PC-3 (cell line): ENCODE measurements at regions of chr1 and their contacts with region 1.

Region 1: GRCh38 chr1:235295902-235296376 is 32.0 kb downstream of the ARID4B start:
- DNase-seq: peak; percentile 93
- ATAC-seq: peak; percentile 96
- H3K4me3 ChIP-seq: no peak overlapping the region
- H3K27ac ChIP-seq: peak overlapping the region; percentile 68; the same call in 1 of the 2 replicates
- H3K4me1 ChIP-seq: peaks cover 8% of the 10 kb centered on the region
- H3K27me3 ChIP-seq: no peaks in the 10 kb centered on the region
- CTCF ChIP-seq: no peak

Region 2: GRCh38 chr1:235226933-235227332 is 69.0 kb before region 1 on chr1:
- CTCF ChIA-PET with region 1: no interaction called
- POLR2A ChIA-PET with region 1: interaction called, 23 read pairs
- intact Hi-C with region 1: no loop called
- DNase-seq: no peak
- ATAC-seq: no peak
- H3K4me3 ChIP-seq: no peak overlapping the region
- H3K27ac ChIP-seq: no peak overlapping the region
- H3K4me1 ChIP-seq: no peaks in the 10 kb centered on the region
- H3K27me3 ChIP-seq: no peaks in the 10 kb centered on the region
- CTCF ChIP-seq: no peak

Region 3: GRCh38 chr1:235270625-235271024 is 25.3 kb before region 1 on chr1:
- CTCF ChIA-PET with region 1: no interaction called
- POLR2A ChIA-PET with region 1: no interaction called
- intact Hi-C with region 1: no loop called
- DNase-seq: no peak
- ATAC-seq: no peak
- H3K4me3 ChIP-seq: no peak overlapping the region
- H3K27ac ChIP-seq: no peak overlapping the region
- H3K4me1 ChIP-seq: no peaks in the 10 kb centered on the region
- H3K27me3 ChIP-seq: no peaks in the 10 kb centered on the region
- CTCF ChIP-seq: no peak

Region 4: GRCh38 chr1:235317168-235317567 is 21.2 kb after region 1 on chr1:
- CTCF ChIA-PET with region 1: no interaction called
- POLR2A ChIA-PET with region 1: no interaction called
- intact Hi-C with region 1: loop called (anchors 1 kb)
- DNase-seq: no peak
- ATAC-seq: no peak
- H3K4me3 ChIP-seq: no peak overlapping the region
- H3K27ac ChIP-seq: no peak overlapping the region
- H3K4me1 ChIP-seq: no peaks in the 10 kb centered on the region
- H3K27me3 ChIP-seq: no peaks in the 10 kb centered on the region
- CTCF ChIP-seq: no peak